Common myeloid progenitor, CD34-positive (primary cell): ENCODE measurements at regions of chr13 and their contacts with region 1.

Region 1: DNA sequence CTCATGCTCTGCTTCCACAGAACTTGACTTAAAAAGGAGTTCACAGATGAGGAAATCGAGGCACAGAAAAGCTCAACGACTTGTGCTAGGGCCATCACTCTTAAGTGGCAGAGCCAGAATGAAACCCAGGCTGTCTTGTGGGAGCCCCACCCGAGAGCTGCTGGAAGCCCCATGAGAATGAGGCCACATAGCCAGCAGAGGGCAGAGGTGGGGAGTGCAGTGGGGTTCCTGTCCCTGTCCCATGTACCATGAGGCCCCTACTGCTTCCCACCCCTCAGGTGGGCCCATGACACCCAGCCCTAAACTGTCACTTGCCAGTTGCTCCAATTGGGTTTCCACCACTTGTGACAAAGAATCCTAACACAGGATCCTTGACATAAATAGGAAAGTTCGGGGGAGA is 175.9 kb downstream of the IRS2 start:
- DNase-seq: peak; percentile 54 to 75 (median 73)
- H3K4me3 ChIP-seq: no peak overlapping the region
- H3K27ac ChIP-seq: no peak overlapping the region
- H3K4me1 ChIP-seq: no peaks in the 10 kb centered on the region
- H3K27me3 ChIP-seq: no peaks in the 10 kb centered on the region

Region 2: GRCh38 chr13:109500146-109500773 is 110.3 kb before region 1 on chr13:
- CTCF ChIA-PET with region 1: no interaction called
- POLR2A ChIA-PET with region 1: no interaction called
- DNase-seq: no peak
- H3K4me3 ChIP-seq: no peak overlapping the region
- H3K27ac ChIP-seq: no peak overlapping the region
- H3K4me1 ChIP-seq: no peaks in the 10 kb centered on the region
- H3K27me3 ChIP-seq: peaks cover 0 to 2% (median 0%) of the 10 kb centered on the region in 5 experiments

Region 3: GRCh38 chr13:109743706-109744453 is 133.4 kb after region 1 on chr13:
- CTCF ChIA-PET with region 1: interaction called, 11 read pairs
- POLR2A ChIA-PET with region 1: no interaction called
- DNase-seq: peak; percentile 83 to 99 (median 97)
- H3K4me3 ChIP-seq: peak overlapping the region in 4 of 7 experiments; percentile 4 to 46 (median 22)
- H3K27ac ChIP-seq: no peak overlapping the region
- H3K4me1 ChIP-seq: peaks cover 2 to 28% (median 24%) of the 10 kb centered on the region in 4 experiments
- H3K27me3 ChIP-seq: no peaks in the 10 kb centered on the region

Region 4: GRCh38 chr13:109790951-109791605 is 180.6 kb after region 1 on chr13:
- CTCF ChIA-PET with region 1: interaction called, 16 read pairs
- POLR2A ChIA-PET with region 1: no interaction called
- DNase-seq: peak; percentile 78 to 91 (median 89)
- H3K4me3 ChIP-seq: no peak overlapping the region
- H3K27ac ChIP-seq: no peak overlapping the region
- H3K4me1 ChIP-seq: peaks cover 0 to 14% (median 4%) of the 10 kb centered on the region in 4 experiments
- H3K27me3 ChIP-seq: peaks cover 0 to 14% (median 4%) of the 10 kb centered on the region in 5 experiments